ENCODE measurements at regions of chr3 and their contacts with region 1.

Region 1: DNA sequence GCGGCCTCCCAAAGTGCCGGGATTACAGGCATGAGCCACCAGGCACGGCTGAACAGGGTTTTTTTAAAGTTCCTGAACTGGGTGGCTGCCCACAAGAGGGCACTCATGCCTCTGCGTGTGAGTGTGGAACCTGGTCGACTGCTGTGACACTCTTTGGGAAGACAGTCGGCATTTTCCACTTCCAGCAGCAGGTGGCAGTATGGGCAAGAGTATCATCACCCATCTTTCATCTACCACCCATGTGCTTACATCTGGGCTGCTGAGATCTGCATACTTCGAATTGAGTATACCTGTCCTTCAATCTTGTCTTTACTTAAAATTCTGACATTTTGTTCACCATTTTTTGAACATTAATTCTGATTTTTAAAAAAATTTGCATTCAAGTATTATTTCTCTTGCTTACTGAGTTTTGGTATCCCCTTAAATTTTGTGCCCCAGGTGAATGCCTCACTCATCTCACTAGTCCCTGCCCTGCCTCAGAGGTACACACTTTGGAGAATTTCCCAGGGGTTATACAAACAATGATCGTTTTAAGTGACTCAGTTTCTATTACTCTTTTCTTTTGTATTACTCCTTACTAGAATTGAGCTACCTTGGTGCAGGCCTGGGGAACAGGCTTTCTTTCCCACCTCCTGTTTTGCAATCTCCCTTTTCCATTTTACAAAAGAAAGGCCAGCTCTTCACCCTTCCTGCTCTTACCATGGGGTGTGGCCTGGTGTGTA is 11.8 kb downstream of the CLEC3B start:
- DNase-seq: peak; percentile 96
- H3K4me3 ChIP-seq: no peak overlapping the region
- H3K27ac ChIP-seq: no peak overlapping the region
- H3K4me1 ChIP-seq: peaks cover 8 to 38% of the 10 kb centered on the region in 2 donors
- H3K27me3 ChIP-seq: no peaks in the 10 kb centered on the region
- CTCF ChIP-seq: peak; percentile 79 to 99 (median 90)
- POLR2A ChIP-seq: no peak

Region 2: DNA sequence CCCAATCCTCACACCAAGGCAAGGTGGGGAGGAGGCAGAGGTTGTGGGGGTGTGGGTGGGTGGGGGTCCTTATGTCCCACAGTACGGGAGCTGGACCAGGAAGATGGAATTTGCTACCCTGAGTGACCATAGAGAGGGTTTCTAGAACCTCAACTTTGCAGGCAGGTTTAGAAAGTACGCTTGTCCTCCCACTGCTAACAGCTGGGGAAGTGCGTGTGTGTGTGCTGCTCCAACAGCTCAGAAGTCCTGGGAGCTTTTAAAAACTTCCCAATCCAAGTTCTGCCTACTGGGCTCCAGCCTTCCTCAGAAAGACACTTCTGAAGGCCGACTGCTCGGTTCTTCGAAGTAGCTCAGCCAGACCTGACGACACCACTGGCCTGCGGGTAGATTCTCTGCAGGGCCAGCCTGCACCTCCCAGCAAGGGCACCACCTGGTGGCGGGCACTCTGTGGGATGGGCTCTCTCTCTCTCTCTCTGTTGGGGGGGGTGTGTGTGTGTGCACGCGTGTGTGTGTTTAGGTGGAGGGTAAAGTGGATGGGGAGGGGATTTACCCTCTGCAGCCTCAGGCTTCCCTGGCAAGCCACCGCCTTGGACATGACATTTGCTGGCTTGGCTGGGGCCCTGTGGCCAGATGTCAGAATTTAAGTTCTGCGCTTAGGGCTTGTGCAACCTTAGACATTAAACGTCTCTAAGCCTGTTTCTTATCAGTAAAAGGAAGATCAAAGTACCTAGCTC is 172.6 kb after region 1 on chr3:
- intact Hi-C with region 1: loop called (anchors 5 kb)
- DNase-seq: peak; percentile 89 to 91
- H3K4me3 ChIP-seq: no peak overlapping the region
- H3K27ac ChIP-seq: no peak overlapping the region
- H3K4me1 ChIP-seq: no peaks in the 10 kb centered on the region
- H3K27me3 ChIP-seq: no peaks in the 10 kb centered on the region
- CTCF ChIP-seq: peak; percentile 51 to 99 (median 90)
- POLR2A ChIP-seq: no peak

Region 3: GRCh38 chr3:45347315-45348000 is 309.6 kb after region 1 on chr3:
- intact Hi-C with region 1: no loop called
- DNase-seq: no peak
- H3K4me3 ChIP-seq: no peak overlapping the region
- H3K27ac ChIP-seq: no peak overlapping the region
- H3K4me1 ChIP-seq: no peaks in the 10 kb centered on the region
- H3K27me3 ChIP-seq: no peaks in the 10 kb centered on the region
- CTCF ChIP-seq: no peak
- POLR2A ChIP-seq: no peak

Region 4: DNA sequence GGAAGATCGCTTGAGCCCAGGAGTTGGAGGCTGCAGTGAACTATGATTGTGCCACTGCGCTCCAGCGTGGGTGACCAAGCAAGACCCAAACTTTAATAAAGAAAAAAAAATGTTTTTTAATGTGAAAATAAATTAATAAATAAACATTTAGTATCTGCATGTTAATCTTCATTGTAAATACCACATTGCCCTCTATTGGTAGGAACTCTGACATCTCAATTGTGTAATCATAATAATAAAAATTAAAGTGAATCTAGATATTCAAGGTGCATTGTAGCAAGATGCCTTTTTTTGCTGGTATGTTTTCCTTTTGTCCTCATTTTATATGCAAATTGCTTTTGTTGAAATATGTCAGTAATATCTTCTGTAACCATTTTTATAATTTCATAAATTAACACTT is 461.6 kb after region 1 on chr3:
- intact Hi-C with region 1: loop called (anchors 10 kb)
- DNase-seq: no peak
- H3K4me3 ChIP-seq: no peak overlapping the region
- H3K27ac ChIP-seq: no peak overlapping the region
- H3K4me1 ChIP-seq: no peaks in the 10 kb centered on the region
- H3K27me3 ChIP-seq: no peaks in the 10 kb centered on the region
- CTCF ChIP-seq: peak in 4 of 6 experiments; percentile 18 to 56 (median 44)
- POLR2A ChIP-seq: no peak

Region 5: GRCh38 chr3:45656575-45657363 is 618.9 kb after region 1 on chr3:
- intact Hi-C with region 1: loop called (anchors 5 kb)
- DNase-seq: peak; percentile 91 to 93
- H3K4me3 ChIP-seq: no peak overlapping the region
- H3K27ac ChIP-seq: peak overlapping the region in 2 of 3 donors; percentile 39 to 49
- H3K4me1 ChIP-seq: peaks cover 25 to 54% of the 10 kb centered on the region in 2 donors
- H3K27me3 ChIP-seq: no peaks in the 10 kb centered on the region
- CTCF ChIP-seq: peak; percentile 81 to 99 (median 94)
- POLR2A ChIP-seq: no peak

Measured in thyroid gland (tissue), 4 donors.